K562 (cell line): ENCODE measurements at regions of chr1 and their contacts with region 1.

Region 1: DNA sequence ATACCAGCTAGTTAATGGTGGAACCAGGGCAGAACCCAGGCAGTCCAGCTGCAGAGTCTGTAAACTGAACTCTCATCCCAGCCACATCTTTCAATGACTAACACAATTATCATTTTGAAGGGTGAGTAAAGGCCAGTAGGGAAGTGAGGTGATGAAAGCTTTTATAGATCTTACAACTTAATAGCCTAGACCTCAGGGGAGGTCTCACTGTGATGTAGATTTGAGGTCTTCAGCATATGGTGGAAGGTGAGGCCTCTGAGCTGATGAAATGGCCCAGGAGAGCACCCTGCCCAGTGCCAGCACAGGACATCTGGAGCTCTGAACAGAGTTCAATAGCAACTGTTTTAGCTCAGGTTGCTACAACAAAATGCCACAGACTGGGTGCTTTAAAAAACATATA is 44.8 kb upstream of the POU2F1 start:
- DNase-seq: no peak
- ATAC-seq: no peak
- H3K4me3 ChIP-seq: no peak overlapping the region
- H3K27ac ChIP-seq: no peak overlapping the region
- H3K4me1 ChIP-seq: no peaks in the 10 kb centered on the region
- H3K27me3 ChIP-seq: peaks cover 27 to 37% of the 10 kb centered on the region in 2 experiments
- CTCF ChIP-seq: no peak
- EP300 ChIP-seq: no peak
- POLR2A ChIP-seq: no peak
- RAD21 ChIP-seq: no peak

Region 2: DNA sequence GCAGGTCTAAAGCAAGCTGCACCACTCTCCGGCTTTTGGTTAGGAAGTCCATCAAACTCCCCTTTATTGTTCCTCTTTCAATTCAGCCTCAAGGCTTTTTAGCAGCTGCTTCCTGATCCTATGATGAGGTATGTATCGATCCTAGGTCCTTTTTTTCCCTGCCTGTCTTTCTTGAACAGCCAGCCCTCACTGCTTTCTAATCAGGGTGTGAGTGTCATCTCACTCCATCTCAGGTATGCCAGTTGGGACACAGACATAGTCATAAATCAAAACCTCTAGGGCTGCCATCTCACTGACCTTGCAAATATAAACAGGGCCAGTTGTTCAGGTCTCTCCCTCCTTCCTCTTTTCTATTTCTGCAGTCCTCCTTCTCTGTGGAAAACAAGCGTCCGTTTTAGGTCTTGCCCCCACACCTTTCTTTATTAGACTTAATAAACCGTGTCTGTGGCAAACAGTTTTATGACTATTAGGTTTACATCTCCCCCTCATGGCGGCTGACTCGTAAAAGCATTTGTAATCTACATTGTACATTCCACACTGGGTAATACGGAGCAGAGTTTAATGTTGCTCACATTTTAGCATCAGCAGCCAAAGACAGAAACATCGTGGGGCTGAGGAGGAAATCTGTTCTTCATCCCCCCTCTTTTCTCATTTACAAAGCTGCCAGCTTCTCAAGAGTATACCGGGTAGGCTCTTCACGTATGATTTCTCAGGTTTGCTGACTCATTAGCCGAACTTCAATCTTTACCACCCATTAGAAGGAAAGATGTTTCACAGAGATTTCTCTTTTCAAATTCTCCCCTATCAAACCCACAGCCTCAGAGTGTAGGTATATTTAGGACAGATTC is 70.4 kb before region 1 on chr1:
- CTCF ChIA-PET with region 1: no interaction called
- POLR2A ChIA-PET with region 1: no interaction called
- in situ Hi-C with region 1: no loop called
- intact Hi-C with region 1: no loop called
- DNase-seq: no peak
- ATAC-seq: no peak
- H3K4me3 ChIP-seq: no peak overlapping the region
- H3K27ac ChIP-seq: no peak overlapping the region
- H3K4me1 ChIP-seq: no peaks in the 10 kb centered on the region
- H3K27me3 ChIP-seq: peaks cover 25 to 29% of the 10 kb centered on the region in 2 experiments
- CTCF ChIP-seq: no peak
- EP300 ChIP-seq: no peak
- POLR2A ChIP-seq: no peak
- RAD21 ChIP-seq: no peak

Region 3: DNA sequence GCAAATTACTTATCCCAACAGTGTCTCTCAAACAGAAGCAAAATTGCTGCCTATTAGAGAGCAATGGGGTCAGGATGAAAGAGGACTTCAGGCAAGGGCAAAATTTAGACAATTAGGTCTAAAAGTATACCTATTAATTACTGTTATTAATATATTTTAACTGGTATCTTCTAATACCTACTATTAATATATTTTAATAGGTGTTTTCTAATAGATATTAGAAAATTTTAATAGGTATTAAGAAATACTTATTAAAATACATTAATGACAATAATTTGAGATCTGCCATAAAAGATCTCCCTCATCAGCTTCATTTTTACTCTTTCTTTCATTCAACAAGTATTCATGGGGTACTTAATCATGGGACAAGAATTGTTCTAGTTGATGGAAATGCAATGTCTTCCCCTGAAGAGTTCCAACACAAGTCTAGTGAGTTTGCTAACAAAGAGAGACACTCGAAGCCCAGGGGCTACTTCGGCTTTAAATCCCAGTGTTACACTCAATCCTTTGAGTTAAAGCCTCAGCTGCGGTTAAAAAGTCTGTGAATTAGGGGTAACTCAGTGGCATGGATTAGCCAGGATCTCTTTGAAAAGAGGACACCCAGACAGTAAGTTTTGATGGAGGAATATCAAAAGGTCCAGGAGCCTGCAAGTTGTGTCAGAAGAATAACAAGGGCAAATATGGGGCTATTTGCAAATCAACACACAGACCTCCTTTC is 37.9 kb before region 1 on chr1:
- CTCF ChIA-PET with region 1: no interaction called
- POLR2A ChIA-PET with region 1: no interaction called
- in situ Hi-C with region 1: no loop called
- intact Hi-C with region 1: loop called (anchors 1 kb)
- DNase-seq: no peak
- ATAC-seq: no peak
- H3K4me3 ChIP-seq: no peak overlapping the region
- H3K27ac ChIP-seq: no peak overlapping the region
- H3K4me1 ChIP-seq: no peaks in the 10 kb centered on the region
- H3K27me3 ChIP-seq: peaks cover 12 to 22% of the 10 kb centered on the region in 2 experiments; a peak in 4 of 5 replicates
- CTCF ChIP-seq: no peak
- EP300 ChIP-seq: no peak
- POLR2A ChIP-seq: no peak
- RAD21 ChIP-seq: no peak